ENCODE measurements at regions of chr22 and their contacts with region 1.

Region 1: DNA sequence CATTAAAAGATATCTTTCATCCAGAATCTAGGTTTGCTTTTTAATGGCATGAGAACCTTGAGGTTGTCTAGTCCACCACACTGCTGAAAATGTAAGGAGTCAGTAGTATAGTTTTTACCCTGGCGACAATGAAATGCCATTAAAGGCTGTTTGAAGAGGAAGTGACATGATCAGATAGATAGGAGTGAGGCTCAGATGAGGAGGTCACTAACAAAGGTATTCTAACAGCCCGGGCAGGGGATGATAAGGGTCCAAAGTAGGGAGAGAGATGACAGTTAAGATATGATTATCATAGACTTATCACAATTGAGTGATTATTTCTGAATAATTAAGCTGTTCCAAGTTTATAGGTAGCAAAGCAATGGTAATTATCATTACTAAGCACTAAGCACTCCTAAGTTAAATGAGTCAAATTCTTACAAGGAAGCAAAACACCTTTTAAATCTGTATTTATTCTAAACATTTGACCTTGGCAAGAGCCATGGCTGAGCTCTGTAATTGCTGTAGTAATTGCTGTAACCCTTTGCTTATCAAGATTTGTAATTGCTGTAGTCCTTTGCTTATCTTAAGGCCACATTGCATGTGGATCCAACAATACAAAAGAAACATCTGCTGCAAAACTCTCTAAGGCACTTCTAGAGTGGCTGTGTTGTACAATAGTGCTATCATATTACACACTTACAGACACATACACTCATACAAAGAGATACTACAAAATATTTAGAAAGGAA is 92.6 kb downstream of the ENTHD1 start:
- DNase-seq: no peak
- ATAC-seq: no peak
- H3K4me3 ChIP-seq: no peak overlapping the region
- H3K27ac ChIP-seq: no peak overlapping the region
- H3K4me1 ChIP-seq: no peaks in the 10 kb centered on the region
- H3K27me3 ChIP-seq: peaks cover 0 to 33% (median 3%) of the 10 kb centered on the region in 3 donors
- CTCF ChIP-seq: no peak

Region 2: DNA sequence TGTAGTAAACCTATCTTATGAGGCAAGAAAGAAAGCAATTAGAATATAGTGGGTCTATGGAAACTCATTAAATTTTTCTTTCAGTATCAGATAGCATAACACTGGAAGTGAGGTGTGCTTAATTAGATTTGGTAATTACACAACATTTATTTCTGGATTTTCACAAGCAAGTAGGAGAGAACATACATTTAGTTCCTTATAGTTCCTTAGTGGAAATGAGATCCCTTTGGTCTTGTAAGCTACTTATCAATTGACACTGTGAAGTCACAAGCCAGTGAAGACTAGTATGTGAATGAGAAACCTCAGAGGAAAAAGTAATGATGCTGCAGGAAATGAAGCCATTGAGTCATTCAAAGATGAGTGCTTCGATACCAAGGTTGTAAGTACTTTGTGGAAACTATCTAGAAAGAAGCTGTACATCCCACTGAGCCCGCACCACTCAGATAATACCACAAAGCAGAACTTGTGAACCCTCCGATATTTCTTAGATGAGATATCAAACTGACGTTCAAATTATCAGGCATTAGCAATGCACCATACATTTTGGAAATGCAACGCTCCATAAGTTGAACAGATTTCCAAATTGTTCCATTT is 39.1 kb after region 1 on chr22:
- intact Hi-C with region 1: loop called in 1 of 2 experiments (anchors 1 kb)
- DNase-seq: no peak
- ATAC-seq: no peak
- H3K4me3 ChIP-seq: no peak overlapping the region
- H3K27ac ChIP-seq: no peak overlapping the region
- H3K4me1 ChIP-seq: no peaks in the 10 kb centered on the region
- H3K27me3 ChIP-seq: peaks cover 0 to 18% (median 0%) of the 10 kb centered on the region in 3 donors
- CTCF ChIP-seq: no peak